A549 (cell line): ENCODE measurements at regions of chr19 and their contacts with region 1.

Region 1: GRCh38 chr19:44689056-44689895 is 9.7 kb upstream of the CEACAM16 start:
- DNase-seq: peak; percentile 66 to 95
- ATAC-seq: peak; percentile 59 to 72
- H3K4me3 ChIP-seq: no peak overlapping the region
- H3K27ac ChIP-seq: peak overlapping the region; percentile 87 to 92
- H3K4me1 ChIP-seq: peaks cover 84% of the 10 kb centered on the region
- CTCF ChIP-seq: peak; percentile 99
- EP300 ChIP-seq: no peak
- POLR2A ChIP-seq: no peak
- RAD21 ChIP-seq: peak; percentile 99 to 100

Region 2: DNA sequence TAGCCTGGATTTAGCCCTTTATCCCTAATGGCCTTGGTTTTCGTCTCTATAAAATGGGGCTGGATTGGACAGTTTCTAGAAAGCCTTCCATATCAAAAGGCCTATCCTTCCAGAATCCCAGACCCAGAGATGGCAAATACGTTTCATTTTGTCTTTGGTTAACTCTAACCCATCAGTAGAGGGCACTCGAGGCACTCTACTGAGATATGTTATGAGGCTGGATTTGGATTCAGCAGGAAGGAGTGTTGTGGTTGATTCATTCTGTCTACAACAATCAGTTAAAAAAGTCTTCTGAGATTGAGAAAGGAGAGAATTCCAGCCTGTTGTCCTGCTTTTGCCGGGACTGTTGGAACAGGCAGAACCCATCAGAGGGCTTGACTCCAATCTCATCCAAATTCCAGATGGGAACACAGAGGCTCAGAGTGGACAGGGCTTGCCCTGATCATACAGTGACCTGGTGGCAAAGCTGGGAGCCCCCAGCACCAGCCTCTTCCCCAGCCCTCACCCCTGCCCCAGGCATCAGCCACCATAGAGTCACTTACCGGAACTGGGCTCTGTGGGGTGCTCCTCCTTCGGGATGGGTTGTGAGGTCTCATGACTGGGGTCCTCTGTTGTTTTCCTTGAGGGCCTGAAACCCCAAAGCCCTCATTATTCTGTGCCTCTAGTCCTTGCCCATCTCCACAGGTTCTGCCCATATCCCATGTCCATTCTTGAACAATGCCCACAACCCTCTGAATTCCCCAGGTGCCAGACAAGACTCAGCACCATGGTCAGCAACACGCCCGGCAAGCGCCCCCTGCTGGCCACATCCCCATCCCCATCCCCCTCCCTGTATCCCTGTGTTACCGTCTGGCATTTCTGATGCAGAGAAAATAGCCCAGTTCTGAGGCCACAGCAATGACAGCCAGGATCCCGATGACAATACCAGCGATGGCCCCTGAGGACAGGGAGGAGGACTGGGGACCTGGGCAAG is 176.7 kb before region 1 on chr19:
- CTCF ChIA-PET with region 1: no interaction called
- POLR2A ChIA-PET with region 1: no interaction called
- DNase-seq: peak; percentile 71 to 79
- ATAC-seq: peak; percentile 86 to 91
- H3K4me3 ChIP-seq: no peak overlapping the region
- H3K27ac ChIP-seq: no peak overlapping the region
- H3K4me1 ChIP-seq: no peaks in the 10 kb centered on the region
- CTCF ChIP-seq: peak; percentile 51
- EP300 ChIP-seq: no peak
- POLR2A ChIP-seq: no peak
- RAD21 ChIP-seq: peak; percentile 59 to 77

Region 3: DNA sequence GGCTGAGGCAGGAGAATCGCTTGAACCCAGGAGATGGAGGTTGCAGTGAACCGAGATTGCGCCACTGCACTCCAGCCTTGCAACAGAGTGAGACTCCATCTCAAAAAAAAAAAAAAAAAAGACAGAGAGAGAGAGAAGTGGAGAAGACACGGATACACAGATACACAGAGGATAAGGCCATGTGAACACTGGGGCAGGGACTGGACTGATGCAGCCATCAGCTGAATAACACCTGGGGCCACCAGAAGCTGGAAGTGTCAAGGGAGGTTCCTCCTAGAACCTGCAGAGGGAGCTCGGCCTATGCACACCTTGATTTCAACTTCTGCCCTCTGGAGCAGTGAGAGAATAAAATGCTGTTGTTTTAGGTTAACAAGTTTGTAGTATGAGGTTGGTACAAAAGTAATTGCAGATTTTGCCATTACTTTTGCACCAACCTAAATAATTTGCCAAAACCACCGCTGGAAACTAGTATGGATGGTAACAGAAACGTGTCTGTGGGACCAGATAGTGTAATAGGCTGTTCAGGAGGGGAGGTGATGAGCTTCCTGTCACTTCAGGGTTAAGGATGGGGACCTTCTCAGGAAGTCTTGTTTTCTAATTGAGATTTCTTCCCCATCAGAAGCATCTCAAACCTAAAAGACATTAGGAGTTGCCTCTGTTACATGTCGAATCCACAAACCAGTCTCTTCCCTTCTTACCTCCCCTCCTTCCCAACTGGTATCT is 112.3 kb before region 1 on chr19:
- CTCF ChIA-PET with region 1: interaction called, 19 read pairs
- POLR2A ChIA-PET with region 1: no interaction called
- DNase-seq: peak; percentile 65 to 81
- ATAC-seq: peak; percentile 91 to 94
- H3K4me3 ChIP-seq: no peak overlapping the region
- H3K27ac ChIP-seq: peak overlapping the region in 1 of 2 experiments; percentile 5; a peak in 1 of 6 replicates
- H3K4me1 ChIP-seq: no peaks in the 10 kb centered on the region
- CTCF ChIP-seq: peak; percentile 86
- EP300 ChIP-seq: no peak
- POLR2A ChIP-seq: no peak
- RAD21 ChIP-seq: peak; percentile 84 to 96

Region 4: GRCh38 chr19:44627407-44628030 is 61.8 kb before region 1 on chr19:
- CTCF ChIA-PET with region 1: no interaction called
- POLR2A ChIA-PET with region 1: no interaction called
- DNase-seq: no peak
- ATAC-seq: no peak
- H3K4me3 ChIP-seq: no peak overlapping the region
- H3K27ac ChIP-seq: peak overlapping the region; percentile 81 to 89
- H3K4me1 ChIP-seq: peaks cover 43% of the 10 kb centered on the region
- CTCF ChIP-seq: no peak
- EP300 ChIP-seq: no peak
- POLR2A ChIP-seq: no peak
- RAD21 ChIP-seq: no peak

Region 5: GRCh38 chr19:44662691-44663385 is 26.4 kb before region 1 on chr19:
- CTCF ChIA-PET with region 1: interaction called, 180 read pairs
- POLR2A ChIA-PET with region 1: no interaction called
- DNase-seq: no peak
- ATAC-seq: no peak
- H3K4me3 ChIP-seq: no peak overlapping the region
- H3K27ac ChIP-seq: peak overlapping the region in 1 of 2 experiments; percentile 40; a peak in 2 of 6 replicates
- H3K4me1 ChIP-seq: peaks cover 18% of the 10 kb centered on the region; the same call in 1 of the 3 replicates
- CTCF ChIP-seq: no peak
- EP300 ChIP-seq: no peak
- POLR2A ChIP-seq: no peak
- RAD21 ChIP-seq: no peak

Region 6: DNA sequence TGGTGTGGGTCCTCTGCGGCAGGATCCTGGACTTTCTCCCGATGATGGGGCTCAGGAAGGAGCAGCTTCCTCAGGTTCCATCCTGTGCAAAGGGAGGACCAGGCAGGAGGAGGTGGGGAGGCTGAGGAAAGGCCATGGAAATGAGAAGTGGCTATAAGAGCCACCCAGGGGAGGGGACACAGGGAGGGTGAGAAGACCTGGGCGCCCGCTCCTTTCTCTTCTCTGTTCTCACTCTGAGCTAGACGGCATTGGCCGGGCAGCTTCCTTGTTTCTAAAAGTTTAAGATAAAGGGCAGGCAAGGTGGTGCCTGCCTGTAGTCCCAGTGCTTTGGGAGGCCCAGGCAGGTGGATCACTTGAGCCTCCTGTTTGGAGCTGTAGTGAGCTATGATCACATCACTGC is 43.3 kb after region 1 on chr19:
- CTCF ChIA-PET with region 1: interaction called, 694 read pairs
- POLR2A ChIA-PET with region 1: interaction called, 4 read pairs
- DNase-seq: no peak
- ATAC-seq: no peak
- H3K4me3 ChIP-seq: no peak overlapping the region
- H3K27ac ChIP-seq: peak overlapping the region; percentile 61 to 78
- H3K4me1 ChIP-seq: peaks cover 42% of the 10 kb centered on the region
- CTCF ChIP-seq: no peak
- EP300 ChIP-seq: no peak
- POLR2A ChIP-seq: no peak
- RAD21 ChIP-seq: no peak

Region 7: GRCh38 chr19:44752816-44753618 is 63.7 kb after region 1 on chr19:
- CTCF ChIA-PET with region 1: interaction called, 20 read pairs
- POLR2A ChIA-PET with region 1: no interaction called
- DNase-seq: peak; percentile 93 to 97
- ATAC-seq: peak; percentile 52 to 61
- H3K4me3 ChIP-seq: peak overlapping the region; percentile 95
- H3K27ac ChIP-seq: peak overlapping the region; percentile 92 to 99
- H3K4me1 ChIP-seq: peaks cover 83% of the 10 kb centered on the region
- CTCF ChIP-seq: no peak
- EP300 ChIP-seq: peak; percentile 78 to 92; a peak in 4 of 5 replicates
- POLR2A ChIP-seq: no peak
- RAD21 ChIP-seq: no peak; a peak in 2 of 5 replicates

Region 8: GRCh38 chr19:44789943-44790483 is 100.7 kb after region 1 on chr19:
- CTCF ChIA-PET with region 1: interaction called, 16 read pairs
- POLR2A ChIA-PET with region 1: no interaction called
- DNase-seq: no peak
- ATAC-seq: no peak
- H3K4me3 ChIP-seq: no peak overlapping the region
- H3K27ac ChIP-seq: no peak overlapping the region
- H3K4me1 ChIP-seq: no peaks in the 10 kb centered on the region
- CTCF ChIP-seq: no peak
- EP300 ChIP-seq: no peak
- POLR2A ChIP-seq: no peak
- RAD21 ChIP-seq: no peak

Region 9: GRCh38 chr19:44845612-44846454 is 156.6 kb after region 1 on chr19 and contains the start of gene NECTIN2:
- CTCF ChIA-PET with region 1: interaction called, 30 read pairs
- POLR2A ChIA-PET with region 1: interaction called, 3 read pairs
- DNase-seq: peak; percentile 99 to 100
- ATAC-seq: peak; percentile 67 to 73
- H3K4me3 ChIP-seq: peak within 1 kb of the TSS; percentile 97
- H3K27ac ChIP-seq: peak within 1 kb of the TSS; percentile 94 to 95
- H3K4me1 ChIP-seq: peaks cover 37% of the 10 kb centered on the region
- CTCF ChIP-seq: peak; percentile 96
- EP300 ChIP-seq: no peak
- POLR2A ChIP-seq: peak; percentile 63
- RAD21 ChIP-seq: peak; percentile 73 to 75
- polyA plus RNA-seq, gene NECTIN2: 69.4 and 84.8 TPM in 2 replicates